B cell (primary cell): ENCODE measurements at regions of chr16 and their contacts with region 1.

Region 1: DNA sequence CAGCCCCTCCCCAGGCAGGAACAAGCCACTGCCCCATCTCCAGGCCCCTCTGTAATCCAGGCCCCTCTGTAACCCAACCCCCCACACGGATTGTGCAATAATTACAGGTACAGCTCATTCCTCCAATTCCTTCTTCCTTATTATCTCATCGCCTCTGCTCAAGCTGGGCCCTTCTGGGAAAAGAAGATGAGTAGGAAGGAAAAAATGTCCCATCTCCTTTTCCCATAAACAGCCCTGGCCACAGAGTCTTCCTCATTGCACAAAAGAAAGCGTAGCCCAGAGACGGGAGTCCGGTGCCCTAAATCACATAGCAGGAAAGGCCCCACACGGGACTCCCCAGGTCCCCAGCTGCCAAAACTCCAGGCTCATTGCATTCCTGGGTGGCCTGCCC is 3.6 kb upstream of the LITAFD start:
- DNase-seq: no peak
- ATAC-seq: no peak
- H3K4me3 ChIP-seq: no peak overlapping the region
- H3K4me3 Mint-ChIP-seq: no peak overlapping the region
- H3K27ac ChIP-seq: no peak overlapping the region
- H3K27ac Mint-ChIP-seq: no peak overlapping the region
- H3K4me1 ChIP-seq: peaks cover 0 to 5% of the 10 kb centered on the region in 2 donors
- H3K4me1 Mint-ChIP-seq: peaks cover 7% of the 10 kb centered on the region
- H3K27me3 ChIP-seq: peaks cover 0 to 6% (median 3%) of the 10 kb centered on the region in 4 experiments
- H3K27me3 Mint-ChIP-seq: peaks cover 8% of the 10 kb centered on the region
- CTCF ChIP-seq: no peak

Region 2: GRCh38 chr16:8567750-8568617 is 310.5 kb before region 1 on chr16:
- CTCF ChIA-PET with region 1: interaction called, 27 read pairs
- POLR2A ChIA-PET with region 1: no interaction called
- intact Hi-C with region 1: loop called (anchors 1 kb)
- DNase-seq: peak; percentile 86
- ATAC-seq: peak; percentile 93
- H3K4me3 ChIP-seq: no peak overlapping the region
- H3K4me3 Mint-ChIP-seq: no peak overlapping the region
- H3K27ac ChIP-seq: no peak overlapping the region
- H3K27ac Mint-ChIP-seq: peak overlapping the region; percentile 34
- H3K4me1 ChIP-seq: peaks cover 0 to 6% of the 10 kb centered on the region in 2 donors
- H3K4me1 Mint-ChIP-seq: peaks cover 7% of the 10 kb centered on the region
- H3K27me3 ChIP-seq: peaks cover 0 to 3% (median 0%) of the 10 kb centered on the region in 4 experiments
- H3K27me3 Mint-ChIP-seq: peaks cover 16% of the 10 kb centered on the region
- CTCF ChIP-seq: peak; percentile 100

Region 3: GRCh38 chr16:8572919-8573724 is 305.4 kb before region 1 on chr16:
- CTCF ChIA-PET with region 1: interaction called, 27 read pairs
- POLR2A ChIA-PET with region 1: no interaction called
- intact Hi-C with region 1: no loop called
- DNase-seq: no peak
- ATAC-seq: no peak
- H3K4me3 ChIP-seq: no peak overlapping the region
- H3K4me3 Mint-ChIP-seq: no peak overlapping the region
- H3K27ac ChIP-seq: no peak overlapping the region
- H3K27ac Mint-ChIP-seq: no peak overlapping the region
- H3K4me1 ChIP-seq: no peaks in the 10 kb centered on the region
- H3K4me1 Mint-ChIP-seq: peaks cover 1% of the 10 kb centered on the region
- H3K27me3 ChIP-seq: peaks cover 0 to 14% (median 6%) of the 10 kb centered on the region in 4 experiments
- H3K27me3 Mint-ChIP-seq: peaks cover 34% of the 10 kb centered on the region
- CTCF ChIP-seq: peak; percentile 29

Region 4: DNA sequence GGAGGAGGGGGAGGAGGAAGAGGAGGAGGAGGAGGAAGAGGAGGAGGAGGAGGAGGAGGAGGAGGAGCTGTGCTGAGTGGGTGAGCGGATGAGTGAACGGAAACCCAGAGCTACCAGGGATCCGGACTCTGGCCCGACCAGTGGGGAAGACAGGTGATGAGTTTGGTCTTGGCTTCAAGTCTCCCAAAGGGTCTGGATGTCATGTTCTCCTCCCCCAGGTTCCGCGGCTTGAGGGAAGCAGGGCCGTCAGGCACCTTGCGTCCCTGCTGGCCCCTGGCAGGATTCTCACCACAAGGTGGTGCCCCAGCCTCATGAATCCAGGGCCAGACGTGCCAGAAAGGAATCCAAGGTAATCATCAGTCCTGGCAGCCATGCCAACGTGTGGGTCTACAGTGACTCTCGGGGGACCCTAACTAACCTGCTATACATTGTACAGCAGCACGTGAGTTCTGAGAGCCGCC is 217.6 kb before region 1 on chr16:
- CTCF ChIA-PET with region 1: interaction called, 40 read pairs
- POLR2A ChIA-PET with region 1: no interaction called
- intact Hi-C with region 1: loop called (anchors 1 kb)
- DNase-seq: peak; percentile 61
- ATAC-seq: peak; percentile 56
- H3K4me3 ChIP-seq: no peak overlapping the region
- H3K4me3 Mint-ChIP-seq: no peak overlapping the region
- H3K27ac ChIP-seq: no peak overlapping the region
- H3K27ac Mint-ChIP-seq: no peak overlapping the region
- H3K4me1 ChIP-seq: no peaks in the 10 kb centered on the region
- H3K4me1 Mint-ChIP-seq: no peaks in the 10 kb centered on the region
- H3K27me3 ChIP-seq: no peaks in the 10 kb centered on the region
- H3K27me3 Mint-ChIP-seq: no peaks in the 10 kb centered on the region
- CTCF ChIP-seq: peak; percentile 36

Region 5: DNA sequence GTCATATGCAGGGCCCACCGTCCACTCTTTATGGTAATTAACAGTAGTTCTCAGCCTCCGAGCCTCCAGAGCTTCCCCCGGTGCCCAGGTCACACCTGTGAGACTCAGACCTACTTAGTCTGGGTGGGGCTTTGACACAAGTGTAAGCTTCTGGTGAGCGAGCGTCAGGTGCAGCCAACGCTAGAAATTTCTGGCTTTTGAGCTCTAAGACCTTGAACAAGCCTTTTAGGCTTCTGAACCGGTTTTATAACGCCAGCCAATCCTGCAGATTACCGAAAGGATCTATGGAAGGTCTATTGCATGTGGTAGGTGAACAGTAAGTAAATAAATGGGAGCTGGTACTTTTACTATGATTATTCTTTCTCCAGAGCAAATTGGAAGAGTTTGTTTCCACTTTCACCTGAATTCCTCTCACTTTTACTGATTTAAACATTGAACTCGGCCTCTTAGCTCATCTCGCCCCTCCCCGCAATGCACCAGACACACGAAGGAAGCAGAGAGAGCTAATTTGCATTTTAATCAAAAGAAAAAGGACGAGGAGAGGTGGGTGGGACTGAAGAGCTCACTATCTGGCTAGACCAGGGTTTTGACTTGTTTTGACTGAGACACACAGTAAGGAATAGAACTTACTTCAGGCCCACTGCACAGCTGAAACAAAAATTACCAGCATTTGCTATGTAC is 157.0 kb before region 1 on chr16:
- CTCF ChIA-PET with region 1: no interaction called
- POLR2A ChIA-PET with region 1: no interaction called
- intact Hi-C with region 1: no loop called
- DNase-seq: no peak
- ATAC-seq: peak; percentile 58
- H3K4me3 ChIP-seq: no peak overlapping the region
- H3K4me3 Mint-ChIP-seq: peak overlapping the region; percentile 81
- H3K27ac ChIP-seq: peak overlapping the region in 1 of 2 donors; percentile 68
- H3K27ac Mint-ChIP-seq: peak overlapping the region; percentile 75
- H3K4me1 ChIP-seq: peaks cover 0 to 26% of the 10 kb centered on the region in 2 donors
- H3K4me1 Mint-ChIP-seq: peaks cover 12% of the 10 kb centered on the region
- H3K27me3 ChIP-seq: no peaks in the 10 kb centered on the region
- H3K27me3 Mint-ChIP-seq: no peaks in the 10 kb centered on the region
- CTCF ChIP-seq: no peak

Region 6: GRCh38 chr16:8855011-8855786 is 23.3 kb before region 1 on chr16:
- CTCF ChIA-PET with region 1: interaction called, 12 read pairs
- POLR2A ChIA-PET with region 1: no interaction called
- intact Hi-C with region 1: no loop called
- DNase-seq: no peak
- ATAC-seq: no peak
- H3K4me3 ChIP-seq: no peak overlapping the region
- H3K4me3 Mint-ChIP-seq: no peak overlapping the region
- H3K27ac ChIP-seq: no peak overlapping the region
- H3K27ac Mint-ChIP-seq: no peak overlapping the region
- H3K4me1 ChIP-seq: peaks cover 5% of the 10 kb centered on the region in 2 donors
- H3K4me1 Mint-ChIP-seq: peaks cover 18% of the 10 kb centered on the region
- H3K27me3 ChIP-seq: no peaks in the 10 kb centered on the region
- H3K27me3 Mint-ChIP-seq: no peaks in the 10 kb centered on the region
- CTCF ChIP-seq: no peak

Region 7: DNA sequence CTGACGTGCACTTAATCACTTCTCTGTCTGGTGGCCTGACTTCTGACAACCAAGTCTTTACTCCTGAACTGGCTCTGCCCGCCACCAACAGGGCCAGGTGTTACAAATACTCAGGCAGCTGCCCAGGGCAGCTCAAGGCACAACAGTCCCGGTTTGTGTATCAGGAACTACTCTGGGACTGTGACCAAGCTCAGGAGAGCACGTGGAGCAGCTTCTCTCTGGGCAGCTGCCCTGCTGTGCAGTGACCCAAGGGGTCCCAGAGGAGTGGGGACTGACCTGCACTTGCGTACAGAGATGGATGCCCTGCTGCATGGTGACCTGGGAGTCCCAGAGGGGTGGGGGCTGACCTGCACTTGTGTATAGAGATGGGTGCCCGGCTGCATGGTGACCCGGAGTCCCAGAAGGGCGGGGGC is 25.5 kb after region 1 on chr16:
- CTCF ChIA-PET with region 1: no interaction called
- POLR2A ChIA-PET with region 1: no interaction called
- intact Hi-C with region 1: no loop called
- DNase-seq: no peak
- ATAC-seq: no peak
- H3K4me3 ChIP-seq: no peak overlapping the region
- H3K4me3 Mint-ChIP-seq: no peak overlapping the region
- H3K27ac ChIP-seq: no peak overlapping the region
- H3K27ac Mint-ChIP-seq: no peak overlapping the region
- H3K4me1 ChIP-seq: no peaks in the 10 kb centered on the region
- H3K4me1 Mint-ChIP-seq: no peaks in the 10 kb centered on the region
- H3K27me3 ChIP-seq: no peaks in the 10 kb centered on the region
- H3K27me3 Mint-ChIP-seq: no peaks in the 10 kb centered on the region
- CTCF ChIP-seq: no peak